AG04449 (cell line): ENCODE measurements at regions of chr10 and their contacts with region 1.

Region 1: GRCh38 chr10:52740913-52741675 is 31.5 kb downstream of the MBL2 start:
- DNase-seq: no peak
- H3K4me3 ChIP-seq: no peak overlapping the region
- CTCF ChIP-seq: peak; percentile 77

Region 2: DNA sequence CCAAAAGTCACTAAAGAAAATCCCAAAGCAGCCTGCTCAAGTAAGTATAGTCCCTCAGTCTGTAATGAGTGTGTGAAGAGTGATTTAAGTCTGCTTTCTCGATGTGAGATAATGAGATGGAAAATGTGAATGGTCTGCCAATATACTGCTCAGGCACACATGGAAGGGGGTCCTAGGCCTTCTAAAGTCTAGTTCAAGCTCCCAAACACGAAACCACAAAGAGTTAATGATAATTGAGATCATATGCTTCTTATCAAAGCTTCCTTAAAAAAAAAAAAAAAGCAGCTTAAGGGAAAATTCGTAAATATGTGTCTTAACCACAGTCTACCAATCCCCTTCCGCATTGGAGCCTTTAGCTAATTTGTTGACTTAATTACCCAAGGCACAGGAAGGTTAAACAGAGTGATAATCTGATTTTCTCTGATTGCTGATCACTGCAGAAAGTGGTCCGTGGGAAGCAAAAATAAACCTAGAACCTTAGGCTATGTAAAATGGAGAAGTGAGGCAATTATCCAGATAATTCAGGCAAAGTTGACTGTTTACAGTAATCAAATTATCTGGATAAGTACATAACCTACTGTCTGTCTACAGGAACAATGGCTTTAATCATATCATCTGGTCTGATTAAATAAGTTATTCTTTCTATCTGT is 141.4 kb before region 1 on chr10:
- CTCF ChIA-PET with region 1: no interaction called
- POLR2A ChIA-PET with region 1: no interaction called
- DNase-seq: no peak
- H3K4me3 ChIP-seq: no peak overlapping the region
- CTCF ChIP-seq: no peak

Region 3: DNA sequence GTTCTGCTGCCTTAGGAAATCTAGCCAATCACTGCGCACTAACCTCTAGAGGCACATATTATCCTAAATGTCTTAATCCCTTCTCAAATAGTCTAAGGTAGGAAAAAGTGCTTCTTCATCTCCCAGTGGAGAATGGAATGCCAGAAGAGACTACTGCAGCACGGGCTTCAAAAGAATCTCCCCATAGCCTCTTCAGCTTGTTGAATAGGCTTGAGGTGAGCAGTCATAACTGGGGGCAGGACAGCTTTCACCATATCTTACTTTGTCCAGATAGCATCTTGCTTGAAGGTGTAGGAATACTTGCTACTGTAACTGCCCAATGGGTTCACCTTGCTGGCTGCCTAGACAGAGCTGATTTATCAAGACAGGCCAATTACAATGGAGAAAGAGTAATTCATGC is 57.3 kb before region 1 on chr10:
- CTCF ChIA-PET with region 1: no interaction called
- POLR2A ChIA-PET with region 1: no interaction called
- DNase-seq: no peak
- H3K4me3 ChIP-seq: no peak overlapping the region
- CTCF ChIP-seq: no peak

Region 4: GRCh38 chr10:52720018-52720417 is 21.1 kb before region 1 on chr10:
- CTCF ChIA-PET with region 1: interaction called, 11 read pairs
- POLR2A ChIA-PET with region 1: no interaction called
- DNase-seq: no peak
- H3K4me3 ChIP-seq: no peak overlapping the region
- CTCF ChIP-seq: no peak

Region 5: GRCh38 chr10:52755297-52756062 is 14.4 kb after region 1 on chr10:
- CTCF ChIA-PET with region 1: interaction called, 44 read pairs
- POLR2A ChIA-PET with region 1: no interaction called
- DNase-seq: peak; percentile 47
- H3K4me3 ChIP-seq: no peak overlapping the region
- CTCF ChIP-seq: no peak

Region 6: DNA sequence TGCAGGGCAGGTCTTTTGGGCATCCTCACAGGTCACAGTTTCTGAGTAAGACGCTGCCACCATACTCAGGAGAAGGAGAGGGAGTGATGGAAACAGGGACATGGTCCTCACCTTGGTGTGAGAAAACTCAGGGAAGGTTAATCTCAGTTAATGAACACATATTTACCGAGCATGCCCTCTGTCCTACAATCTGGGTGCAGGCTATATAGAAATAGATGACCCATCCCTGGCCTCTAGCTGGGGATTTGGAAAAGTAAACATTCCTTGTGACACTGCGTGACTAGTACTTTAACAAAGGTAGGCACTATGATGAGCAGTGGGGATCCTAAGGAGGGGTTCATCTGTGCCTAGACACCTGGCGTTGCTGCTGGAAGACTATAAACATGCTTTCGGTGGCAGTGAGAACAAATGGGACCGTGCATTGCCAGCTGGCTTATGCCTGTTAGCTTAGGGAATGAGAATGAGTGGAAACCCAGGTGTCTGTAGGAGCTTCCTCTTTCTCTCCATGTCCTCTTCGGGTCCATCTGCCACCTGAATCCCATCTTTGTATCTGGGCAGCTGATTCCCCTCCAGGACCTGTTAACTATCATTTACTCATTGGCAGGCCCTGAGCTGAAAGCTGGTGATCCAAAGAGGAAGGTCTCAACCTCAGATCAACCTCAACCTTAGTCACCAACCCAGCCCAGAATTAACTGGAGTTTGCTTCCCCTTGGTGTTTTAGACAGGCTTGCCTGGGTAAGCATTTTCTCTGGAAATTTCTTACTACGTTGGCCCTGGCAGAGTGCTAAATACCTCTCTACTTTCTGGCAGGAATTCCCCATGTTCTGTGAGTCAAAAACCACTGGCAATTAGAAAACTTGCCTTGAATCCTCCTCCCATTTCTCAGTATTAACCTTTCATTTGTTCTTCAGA is 30.7 kb after region 1 on chr10:
- CTCF ChIA-PET with region 1: interaction called, 482 read pairs
- POLR2A ChIA-PET with region 1: no interaction called
- DNase-seq: no peak
- H3K4me3 ChIP-seq: no peak overlapping the region
- CTCF ChIP-seq: no peak

Region 7: GRCh38 chr10:52785418-52785817 is 44.3 kb after region 1 on chr10:
- CTCF ChIA-PET with region 1: interaction called, 482 read pairs
- POLR2A ChIA-PET with region 1: no interaction called
- DNase-seq: no peak
- H3K4me3 ChIP-seq: no peak overlapping the region
- CTCF ChIP-seq: no peak

Region 8: DNA sequence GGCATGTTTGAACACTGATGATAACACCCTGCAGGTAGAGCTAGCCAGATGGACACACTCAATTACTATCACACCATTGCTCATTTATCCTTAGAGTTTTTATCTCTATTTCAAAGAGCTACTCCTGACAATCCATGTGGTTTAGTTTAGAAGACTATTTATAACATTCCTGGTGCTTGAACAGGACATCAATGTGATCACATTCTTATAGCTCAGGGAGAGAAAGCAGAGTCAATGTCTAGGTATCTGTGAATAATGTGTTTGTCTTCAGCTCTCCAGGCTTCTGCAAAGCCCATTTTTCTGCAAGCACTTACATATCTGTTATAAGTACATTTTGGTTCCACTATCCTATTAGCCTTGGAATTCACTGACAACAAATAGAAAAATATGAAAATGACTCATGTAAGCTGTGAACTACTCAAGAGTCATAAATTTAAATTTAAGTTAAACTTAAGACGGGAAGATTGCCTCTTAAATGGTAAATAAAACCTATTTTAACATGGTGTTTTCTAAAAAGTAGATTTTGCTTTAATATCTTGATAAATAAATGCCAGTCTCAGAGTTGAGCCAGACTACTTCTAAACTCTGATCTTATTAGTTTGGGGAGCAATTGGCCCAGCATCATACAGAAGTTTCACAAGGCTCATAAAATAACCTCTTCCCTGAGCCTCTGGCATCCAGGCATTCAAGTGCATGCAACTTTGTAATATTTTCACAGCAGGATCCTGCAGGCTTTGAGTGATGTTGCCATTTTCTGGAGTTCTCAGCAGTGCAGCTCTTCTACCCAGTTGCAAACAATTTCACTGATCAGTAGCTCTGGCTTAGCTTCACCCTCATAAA is 138.3 kb after region 1 on chr10:
- CTCF ChIA-PET with region 1: no interaction called
- POLR2A ChIA-PET with region 1: no interaction called
- DNase-seq: peak; percentile 26
- H3K4me3 ChIP-seq: no peak overlapping the region
- CTCF ChIP-seq: no peak

Region 9: GRCh38 chr10:53033396-53033795 is 292.3 kb after region 1 on chr10:
- CTCF ChIA-PET with region 1: no interaction called
- POLR2A ChIA-PET with region 1: no interaction called
- DNase-seq: no peak
- H3K4me3 ChIP-seq: no peak overlapping the region
- CTCF ChIP-seq: no peak